RWPE1 (cell line): ENCODE measurements at regions of chr19 and their contacts with region 1.

Region 1: GRCh38 chr19:39187559-39187957 is 9.2 kb upstream of the NCCRP1 start:
- DNase-seq: no peak
- H3K27ac ChIP-seq: no peak overlapping the region
- CTCF ChIP-seq: peak; percentile 18

Region 2: DNA sequence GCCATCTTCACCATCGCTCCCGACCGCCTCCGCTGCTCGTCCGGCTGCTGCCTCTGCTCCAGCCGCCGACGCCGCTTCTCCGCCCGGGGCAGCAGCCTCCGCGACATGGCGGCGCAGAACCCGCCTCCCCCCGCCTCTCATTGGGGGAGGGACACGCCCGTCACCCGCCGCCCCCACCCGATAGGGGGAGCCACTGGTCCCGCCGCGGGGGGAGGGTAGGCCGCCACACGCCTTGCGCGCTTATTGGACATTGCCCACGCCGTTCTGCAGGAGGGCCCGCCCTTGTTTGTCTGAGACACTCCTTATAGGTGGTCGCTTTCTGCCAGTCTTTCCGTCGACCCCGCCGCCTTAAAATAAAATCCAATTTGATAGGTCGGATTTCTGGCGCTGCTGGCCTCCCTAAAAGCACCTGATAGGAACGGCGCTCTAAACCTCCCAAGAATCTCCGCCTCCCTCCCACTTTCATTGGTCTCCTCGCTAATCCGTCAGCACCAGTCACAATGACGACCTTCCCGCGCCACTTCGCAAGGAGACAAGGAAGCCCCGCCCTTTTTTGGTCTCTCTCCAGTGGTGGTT is 337.6 kb before region 1 on chr19 and contains the start of gene HNRNPL:
- CTCF ChIA-PET with region 1: no interaction called
- POLR2A ChIA-PET with region 1: no interaction called
- DNase-seq: peak; percentile 99
- H3K27ac ChIP-seq: peak within 1 kb of the TSS; percentile 99
- CTCF ChIP-seq: no peak; the same call in 1 of the 2 replicates

Region 3: DNA sequence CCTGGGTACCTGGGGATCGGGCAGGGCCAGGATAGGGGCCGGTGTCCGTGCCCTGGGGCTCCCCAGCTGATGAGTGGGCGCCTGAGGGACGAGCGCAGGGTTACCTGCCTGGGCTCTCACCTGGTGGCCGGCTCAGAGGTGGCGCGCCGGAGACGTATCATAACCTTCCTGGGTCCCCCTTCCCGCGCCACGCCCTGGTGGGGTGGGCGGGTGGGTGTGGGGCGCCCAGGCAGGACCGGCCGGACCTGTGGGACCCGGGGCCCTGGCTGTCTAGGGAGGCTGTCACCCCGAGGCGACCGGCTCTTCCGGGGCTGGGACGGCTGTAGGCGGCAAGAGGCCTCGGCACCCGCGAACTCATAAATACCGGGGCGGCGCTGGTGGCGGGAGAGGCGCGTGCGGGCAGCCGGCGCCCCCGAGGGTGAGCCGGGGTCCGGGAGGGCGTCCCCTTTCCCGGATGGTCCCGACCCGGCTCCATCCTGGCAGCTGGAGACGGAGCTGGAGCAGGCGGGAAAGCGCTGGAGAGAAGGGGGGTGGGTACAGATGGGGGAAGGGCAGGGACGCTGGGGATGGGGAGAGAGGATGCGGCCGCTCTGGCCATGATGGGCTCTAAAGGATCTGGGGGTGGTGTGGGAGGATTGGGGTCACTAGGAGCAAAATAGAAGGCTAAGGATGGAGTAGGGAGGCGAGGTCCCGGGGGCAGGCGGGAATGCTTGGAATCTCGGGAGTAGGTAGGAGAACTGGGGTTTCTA is 103.4 kb before region 1 on chr19 and contains the start of gene ACP7:
- CTCF ChIA-PET with region 1: no interaction called
- POLR2A ChIA-PET with region 1: no interaction called
- DNase-seq: no peak
- H3K27ac ChIP-seq: no peak within 1 kb of the TSS
- CTCF ChIP-seq: no peak

Region 4: GRCh38 chr19:39177110-39177699 is 10.4 kb before region 1 on chr19:
- CTCF ChIA-PET with region 1: interaction called, 11 read pairs
- POLR2A ChIA-PET with region 1: no interaction called
- DNase-seq: no peak
- H3K27ac ChIP-seq: no peak overlapping the region
- CTCF ChIP-seq: no peak

Region 5: DNA sequence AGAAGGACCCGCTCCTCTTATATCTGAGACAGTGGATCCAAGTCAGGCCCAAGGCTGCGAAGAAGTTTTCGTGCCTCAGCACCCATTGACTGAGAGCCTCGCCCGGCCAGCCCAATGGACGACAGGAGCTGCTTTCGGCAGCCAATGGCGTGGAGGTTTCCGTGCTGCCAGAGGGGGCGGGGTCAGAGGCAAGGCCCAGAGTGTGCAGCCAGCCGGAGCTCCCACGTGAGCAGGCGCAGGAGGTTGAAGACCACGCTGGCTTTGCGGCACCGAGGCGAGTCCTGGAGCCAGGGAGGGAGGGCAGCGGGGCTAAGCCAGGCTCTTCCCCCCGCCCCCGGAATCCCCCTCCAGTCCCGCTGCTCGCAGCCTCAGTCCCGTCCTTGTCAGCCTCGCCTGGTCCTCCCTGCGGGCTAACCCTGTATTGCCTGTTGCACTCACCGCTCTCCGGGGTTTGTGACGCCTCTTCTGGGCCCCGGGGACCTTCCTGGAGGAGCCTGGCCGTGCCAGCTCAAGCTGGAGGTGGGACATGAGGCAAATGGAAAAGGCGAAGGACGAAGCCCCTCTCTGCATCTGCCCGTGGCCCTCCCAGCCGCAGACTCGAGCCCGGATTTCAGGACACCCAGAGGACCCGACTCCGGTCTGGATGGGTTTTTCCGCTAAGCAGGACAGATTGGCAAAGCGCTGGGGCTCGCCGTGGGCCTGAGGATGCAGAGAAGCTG is 59.6 kb after region 1 on chr19:
- CTCF ChIA-PET with region 1: no interaction called
- POLR2A ChIA-PET with region 1: no interaction called
- DNase-seq: no peak
- H3K27ac ChIP-seq: no peak overlapping the region
- CTCF ChIP-seq: no peak